HEK293 (cell line): ENCODE measurements at regions of chr20 and their contacts with region 1.

Region 1: GRCh38 chr20:47379433-47380150 is 23.1 kb upstream of the ZMYND8 start:
- H3K4me3 ChIP-seq: no peak overlapping the region
- H3K27ac ChIP-seq: no peak overlapping the region
- H3K4me1 ChIP-seq: no peaks in the 10 kb centered on the region
- CTCF ChIP-seq: no peak

Region 2: DNA sequence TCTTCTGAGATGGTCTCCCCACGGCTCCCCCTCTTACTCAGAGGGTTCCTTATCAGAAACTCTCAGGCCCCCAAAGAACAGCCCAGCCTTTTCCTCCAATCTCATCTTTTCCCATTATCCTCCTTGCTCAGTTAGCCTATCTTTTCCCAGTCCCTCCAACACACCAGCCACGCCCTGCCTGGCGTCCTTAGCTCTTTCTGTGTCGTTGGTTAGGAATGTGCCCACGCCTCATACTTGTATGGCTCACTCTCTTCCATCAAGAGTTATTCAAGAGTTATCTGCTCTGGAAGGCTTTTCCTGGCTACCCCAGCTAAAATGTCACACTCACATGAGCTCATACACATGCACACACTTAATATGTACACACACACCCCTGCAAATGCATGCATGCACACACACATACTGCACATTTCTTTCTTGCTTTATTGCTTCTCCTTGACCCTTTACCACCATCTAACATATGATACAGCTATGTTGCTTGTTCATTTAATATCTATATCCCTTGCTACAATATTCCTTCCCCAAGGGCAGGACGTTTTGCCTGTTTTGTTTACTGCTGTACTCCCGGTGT is 632.6 kb before region 1 on chr20:
- CTCF ChIA-PET with region 1: interaction called, 12 read pairs
- POLR2A ChIA-PET with region 1: no interaction called
- H3K4me3 ChIP-seq: no peak overlapping the region
- H3K27ac ChIP-seq: no peak overlapping the region
- H3K4me1 ChIP-seq: no peaks in the 10 kb centered on the region
- CTCF ChIP-seq: no peak

Region 3: DNA sequence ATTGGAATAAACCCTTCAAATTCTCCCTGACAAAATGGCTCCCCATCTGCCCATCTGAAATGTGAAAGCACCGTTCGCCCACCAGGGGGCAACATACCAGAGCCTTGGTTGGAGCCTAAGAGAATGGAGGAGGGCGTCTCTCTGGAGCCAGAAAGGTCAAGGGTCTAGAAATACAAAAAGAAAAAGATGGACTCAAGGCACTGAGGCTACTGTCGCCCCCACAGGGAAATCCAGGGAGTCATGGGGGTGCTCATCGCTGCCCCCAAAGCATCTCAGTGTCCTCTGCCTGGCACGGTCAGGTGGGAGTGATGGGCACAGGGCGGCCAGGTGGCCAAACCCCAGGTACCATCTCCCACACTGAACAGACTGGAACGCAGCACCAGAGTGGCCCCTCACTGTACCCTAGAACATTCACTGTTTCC is 159.4 kb before region 1 on chr20:
- CTCF ChIA-PET with region 1: interaction called, 17 read pairs
- POLR2A ChIA-PET with region 1: no interaction called
- H3K4me3 ChIP-seq: no peak overlapping the region
- H3K27ac ChIP-seq: no peak overlapping the region
- H3K4me1 ChIP-seq: no peaks in the 10 kb centered on the region
- CTCF ChIP-seq: peak; percentile 28; the same call in 1 of the 2 replicates

Region 4: DNA sequence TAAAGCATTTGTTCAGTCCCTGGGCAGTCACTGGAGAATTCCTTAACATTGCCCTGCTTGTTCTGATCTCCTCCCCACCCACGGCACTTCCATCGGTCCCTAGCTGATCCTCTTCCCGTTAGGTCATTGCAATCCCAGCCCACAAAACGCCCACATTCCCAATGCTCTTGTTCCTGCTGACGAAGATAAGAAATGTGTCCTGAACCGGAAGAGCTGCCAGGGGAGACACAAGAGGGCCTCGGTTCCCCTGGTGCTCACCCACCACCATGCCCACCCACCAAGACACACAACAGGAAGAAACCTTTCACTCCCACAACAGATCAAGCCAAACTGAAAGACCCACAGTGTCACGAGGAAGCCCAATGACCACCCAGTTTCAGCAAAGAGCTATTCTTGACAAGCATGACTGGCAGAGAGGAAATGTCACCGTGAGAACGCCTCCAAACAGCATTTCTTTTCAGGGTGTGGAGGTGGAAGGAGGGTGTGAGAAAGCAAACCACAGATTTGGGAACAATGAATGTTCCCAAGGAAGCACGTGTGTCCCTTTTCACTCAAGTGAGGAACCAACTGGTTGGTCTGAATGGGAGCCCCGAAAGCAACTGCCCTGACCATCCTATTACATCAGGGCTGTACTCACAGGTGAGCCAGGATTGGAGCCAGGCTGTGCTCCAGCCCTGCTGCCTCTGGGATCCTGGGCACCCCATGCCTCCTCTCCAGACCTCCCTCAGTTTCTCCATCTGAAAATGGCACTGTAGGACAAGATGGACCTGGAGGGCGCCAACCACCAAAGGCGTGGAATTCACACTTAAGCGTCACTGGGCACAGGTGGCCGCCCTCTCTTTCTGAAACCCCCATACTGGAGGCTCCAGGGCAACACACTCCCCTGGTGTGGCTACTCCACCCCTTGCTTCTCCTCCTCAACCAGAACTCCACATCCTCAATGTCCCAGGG is 120.6 kb before region 1 on chr20:
- CTCF ChIA-PET with region 1: interaction called, 12 read pairs
- POLR2A ChIA-PET with region 1: no interaction called
- H3K4me3 ChIP-seq: no peak overlapping the region
- H3K27ac ChIP-seq: no peak overlapping the region
- H3K4me1 ChIP-seq: no peaks in the 10 kb centered on the region
- CTCF ChIP-seq: no peak

Region 5: DNA sequence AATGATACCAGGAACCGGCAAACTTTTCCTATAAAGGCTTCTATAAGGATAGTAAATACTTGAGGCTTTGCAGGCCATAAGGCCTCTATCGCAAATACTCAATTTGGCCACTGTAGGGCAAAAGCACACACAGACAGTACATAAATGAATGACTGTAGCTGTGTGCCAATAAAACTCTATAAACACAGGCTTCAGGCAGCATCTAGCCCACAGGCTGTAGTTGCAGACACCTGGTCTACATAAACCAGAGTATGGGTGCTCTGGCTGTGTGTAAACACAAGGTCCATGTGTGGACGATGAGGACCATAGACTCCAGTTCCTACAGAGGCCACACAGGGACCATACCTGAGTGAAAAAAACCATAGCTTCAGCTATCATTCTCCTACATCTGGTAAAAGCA is 75.3 kb before region 1 on chr20:
- CTCF ChIA-PET with region 1: interaction called, 16 read pairs
- POLR2A ChIA-PET with region 1: no interaction called
- H3K4me3 ChIP-seq: no peak overlapping the region
- H3K27ac ChIP-seq: peak overlapping the region; percentile 39; the same call in 1 of the 2 replicates
- H3K4me1 ChIP-seq: no peaks in the 10 kb centered on the region; the same call in 1 of the 2 replicates
- CTCF ChIP-seq: no peak

Region 6: GRCh38 chr20:47392015-47392720 is 12.6 kb after region 1 on chr20:
- CTCF ChIA-PET with region 1: interaction called, 12 read pairs
- POLR2A ChIA-PET with region 1: no interaction called
- H3K4me3 ChIP-seq: no peak overlapping the region
- H3K27ac ChIP-seq: no peak overlapping the region
- H3K4me1 ChIP-seq: no peaks in the 10 kb centered on the region
- CTCF ChIP-seq: no peak